PC-9 (cell line): ENCODE measurements at regions of chr5 and their contacts with region 1.

Region 1: DNA sequence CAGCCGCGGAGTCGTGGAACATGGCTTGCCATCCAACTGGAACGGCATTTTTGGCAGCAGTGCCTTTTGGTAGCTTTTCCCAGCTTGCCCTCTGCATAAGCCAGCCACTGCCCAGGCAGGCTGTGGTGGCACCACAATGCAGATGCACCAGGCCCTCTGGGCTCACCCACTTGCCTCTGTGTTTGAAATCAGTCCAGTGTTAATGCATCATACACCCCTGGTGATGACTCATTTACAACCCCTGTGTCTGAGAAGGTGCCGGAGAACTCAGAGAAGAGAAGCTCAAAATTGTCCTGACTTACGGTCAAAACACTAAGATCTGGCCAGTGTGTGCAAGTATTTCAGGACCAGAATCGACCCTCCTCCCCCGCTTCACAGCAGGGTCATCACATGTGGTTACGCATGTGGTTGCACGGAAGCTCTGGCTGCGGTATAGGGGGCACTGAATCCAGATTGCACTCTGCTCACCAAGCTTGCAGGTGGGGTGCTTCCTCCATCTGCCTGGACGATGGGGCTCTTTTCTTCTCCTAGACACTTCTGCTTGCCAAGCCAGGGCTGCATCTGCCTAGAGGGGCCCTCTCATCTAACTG is 66.5 kb upstream of the SMIM15 start:
- DNase-seq: peak in 1 of 2 experiments; percentile 3
- H3K4me3 ChIP-seq: no peak overlapping the region
- H3K27ac ChIP-seq: no peak overlapping the region
- H3K4me1 ChIP-seq: no peaks in the 10 kb centered on the region
- H3K27me3 ChIP-seq: no peaks in the 10 kb centered on the region
- CTCF ChIP-seq: no peak

Region 2: GRCh38 chr5:61139100-61139873 is 89.5 kb before region 1 on chr5:
- CTCF ChIA-PET with region 1: no interaction called
- POLR2A ChIA-PET with region 1: no interaction called
- intact Hi-C with region 1: no loop called
- DNase-seq: no peak
- H3K4me3 ChIP-seq: no peak overlapping the region
- H3K27ac ChIP-seq: no peak overlapping the region
- H3K4me1 ChIP-seq: no peaks in the 10 kb centered on the region
- H3K27me3 ChIP-seq: no peaks in the 10 kb centered on the region
- CTCF ChIP-seq: peak; percentile 44

Region 3: GRCh38 chr5:61658592-61659008 is 429.8 kb after region 1 on chr5:
- CTCF ChIA-PET with region 1: no interaction called
- POLR2A ChIA-PET with region 1: interaction called, 22 read pairs
- intact Hi-C with region 1: no loop called
- DNase-seq: peak in 1 of 2 experiments; percentile 82
- H3K4me3 ChIP-seq: no peak overlapping the region
- H3K27ac ChIP-seq: no peak overlapping the region
- H3K4me1 ChIP-seq: no peaks in the 10 kb centered on the region
- H3K27me3 ChIP-seq: no peaks in the 10 kb centered on the region
- CTCF ChIP-seq: peak; percentile 94